HCT116 (cell line): ENCODE measurements at regions of chr10 and their contacts with region 1.

Region 1: GRCh38 chr10:70672165-70673042 is at the start of gene ADAMTS14:
- DNase-seq: peak; percentile 29
- ATAC-seq: peak; percentile 74
- H3K4me3 ChIP-seq: peak within 1 kb of the TSS; percentile 47 to 90
- H3K27ac ChIP-seq: peak within 1 kb of the TSS; percentile 91
- H3K4me1 ChIP-seq: peaks cover 18 to 60% of the 10 kb centered on the region in 2 experiments
- H3K27me3 ChIP-seq: no peaks in the 10 kb centered on the region
- CTCF ChIP-seq: 0 out of 6 replicates have a peak, but pooled peaks of 1 of the 3 experiments have one; percentile 1
- POLR2A ChIP-seq: no peak
- RAD21 ChIP-seq: no peak
- total RNA-seq, gene ADAMTS14: 13.2 TPM

Region 2: GRCh38 chr10:70558871-70559810 is 113.3 kb before region 1 on chr10:
- CTCF ChIA-PET with region 1: no interaction called
- POLR2A ChIA-PET with region 1: no interaction called
- RAD21 ChIA-PET with region 1: no interaction called
- intact Hi-C with region 1: loop called (anchors 5 kb)
- DNase-seq: peak; percentile 65
- ATAC-seq: peak; percentile 92
- H3K4me3 ChIP-seq: peak overlapping the region; percentile 15 to 48
- H3K27ac ChIP-seq: peak overlapping the region; percentile 52
- H3K4me1 ChIP-seq: peaks cover 19 to 86% of the 10 kb centered on the region in 2 experiments
- H3K27me3 ChIP-seq: no peaks in the 10 kb centered on the region
- CTCF ChIP-seq: peak; percentile 51 to 90 (median 66)
- POLR2A ChIP-seq: no peak
- RAD21 ChIP-seq: peak; percentile 73